H1 (cell line): ENCODE measurements at regions of chr2 and their contacts with region 1.

Region 1: GRCh38 chr2:121033461-121033996 is 251.5 kb downstream of the TFCP2L1 start:
- DNase-seq: no peak
- H3K4me3 ChIP-seq: no peak overlapping the region
- H3K27ac ChIP-seq: no peak overlapping the region
- H3K4me1 ChIP-seq: no peaks in the 10 kb centered on the region
- H3K27me3 ChIP-seq: peaks cover 0 to 28% (median 15%) of the 10 kb centered on the region in 4 experiments; a peak in 6 of 7 replicates
- CTCF ChIP-seq: no peak
- EP300 ChIP-seq: no peak
- POLR2A ChIP-seq: no peak
- RAD21 ChIP-seq: no peak

Region 2: DNA sequence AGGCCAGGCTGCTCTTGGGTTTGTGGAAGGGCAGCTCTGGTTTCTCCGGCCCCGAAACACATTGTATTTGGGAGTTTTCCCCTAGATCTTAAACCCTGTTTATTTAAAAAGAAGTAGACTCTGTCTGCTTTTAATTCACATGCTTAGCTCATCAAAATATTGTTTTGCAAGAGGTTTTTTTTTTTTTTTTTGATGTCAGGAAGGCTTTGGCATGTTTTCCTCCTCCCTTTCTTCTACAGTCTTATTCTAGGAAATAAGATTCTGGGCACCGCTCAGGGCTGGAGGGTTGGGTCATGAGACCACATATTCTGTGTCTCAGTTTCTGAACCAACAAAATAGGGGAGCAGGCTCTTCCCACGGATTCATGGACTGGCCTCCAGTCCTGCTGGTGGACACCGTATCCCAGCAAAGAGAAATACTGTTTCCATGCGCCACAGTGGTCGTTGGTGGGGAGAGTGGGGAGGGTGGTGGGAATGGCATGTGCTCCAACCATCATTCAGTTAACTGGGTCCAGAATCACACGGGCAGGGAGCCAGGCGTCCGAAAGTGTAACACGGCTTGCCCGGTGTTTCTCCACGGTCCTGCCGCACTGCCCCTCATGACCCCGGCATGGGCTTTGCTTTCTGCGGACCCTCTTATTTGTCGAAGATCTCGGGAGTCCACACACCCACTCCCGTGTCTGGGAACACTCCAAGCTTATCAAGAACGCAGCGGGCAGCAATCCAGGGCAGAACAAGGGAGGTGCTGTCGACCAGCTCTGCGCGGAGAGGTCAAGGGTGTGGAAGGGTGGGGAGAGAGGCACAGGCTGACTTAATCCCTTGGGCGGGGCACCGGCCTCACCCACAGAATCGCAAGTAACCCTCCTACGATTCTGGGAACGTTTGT is 121.2 kb before region 1 on chr2:
- CTCF ChIA-PET with region 1: no interaction called
- POLR2A ChIA-PET with region 1: no interaction called
- DNase-seq: no peak
- H3K4me3 ChIP-seq: no peak overlapping the region
- H3K27ac ChIP-seq: no peak overlapping the region
- H3K4me1 ChIP-seq: peaks cover 0 to 12% (median 8%) of the 10 kb centered on the region in 4 experiments; a peak in 6 of 7 replicates
- H3K27me3 ChIP-seq: no peaks in the 10 kb centered on the region
- CTCF ChIP-seq: no peak
- EP300 ChIP-seq: no peak
- POLR2A ChIP-seq: no peak
- RAD21 ChIP-seq: no peak

Region 3: GRCh38 chr2:121018136-121019061 is 15.1 kb before region 1 on chr2:
- CTCF ChIA-PET with region 1: interaction called, 12 read pairs
- POLR2A ChIA-PET with region 1: no interaction called
- DNase-seq: peak; percentile 53 to 77
- H3K4me3 ChIP-seq: peak overlapping the region in 1 of 4 experiments; percentile 33; a peak in 1 of 8 replicates
- H3K27ac ChIP-seq: no peak overlapping the region
- H3K4me1 ChIP-seq: peaks cover 0 to 11% (median 10%) of the 10 kb centered on the region in 4 experiments; a peak in 6 of 7 replicates
- H3K27me3 ChIP-seq: peaks cover 0 to 9% (median 5%) of the 10 kb centered on the region in 4 experiments; a peak in 4 of 7 replicates
- CTCF ChIP-seq: no peak
- EP300 ChIP-seq: no peak
- POLR2A ChIP-seq: peak in 1 of 2 experiments; percentile 38; a peak in 1 of 3 replicates
- RAD21 ChIP-seq: no peak

Region 4: GRCh38 chr2:121044412-121044811 is 10.9 kb after region 1 on chr2:
- CTCF ChIA-PET with region 1: interaction called, 37 read pairs
- POLR2A ChIA-PET with region 1: no interaction called
- DNase-seq: peak in 1 of 2 experiments; percentile 68
- H3K4me3 ChIP-seq: no peak overlapping the region
- H3K27ac ChIP-seq: no peak overlapping the region
- H3K4me1 ChIP-seq: no peaks in the 10 kb centered on the region
- H3K27me3 ChIP-seq: no peaks in the 10 kb centered on the region; a peak in 2 of 7 replicates
- CTCF ChIP-seq: peak; percentile 49 to 67 (median 53)
- EP300 ChIP-seq: no peak
- POLR2A ChIP-seq: no peak
- RAD21 ChIP-seq: peak; percentile 35 to 45; a peak in 3 of 4 replicates

Region 5: DNA sequence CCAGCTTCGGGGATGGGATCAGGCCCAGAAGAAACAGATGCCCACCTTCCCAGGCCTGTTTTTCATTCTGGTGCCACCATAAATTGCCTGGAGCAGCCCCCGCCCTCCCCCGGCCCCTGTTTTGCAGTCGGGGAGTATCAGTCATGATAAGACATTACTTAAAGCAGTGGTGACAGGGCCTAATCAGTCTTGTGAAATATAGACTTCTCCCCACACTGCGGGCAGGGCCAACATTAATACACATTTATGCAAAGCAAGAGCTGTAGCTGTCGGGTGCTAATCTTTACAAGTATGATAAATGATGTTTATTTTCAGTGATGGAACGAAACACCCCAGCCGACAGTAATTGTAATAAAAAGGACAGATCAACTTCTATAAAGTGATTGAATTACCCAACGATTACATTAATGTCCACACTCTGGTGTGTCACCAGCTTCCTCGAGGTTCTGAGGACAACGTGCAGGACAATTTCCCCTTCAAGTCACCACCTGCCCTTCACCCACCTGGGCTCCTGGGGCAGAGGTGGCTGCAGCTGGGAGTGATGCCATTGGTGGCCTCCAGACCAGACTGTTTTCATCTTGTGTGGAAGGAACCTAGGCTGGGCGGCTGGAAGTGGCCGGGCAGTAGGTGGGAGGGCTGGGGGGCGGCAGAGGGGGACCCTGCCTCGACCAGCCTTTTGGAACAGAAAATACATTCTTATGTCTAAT is 25.5 kb after region 1 on chr2:
- CTCF ChIA-PET with region 1: no interaction called
- POLR2A ChIA-PET with region 1: no interaction called
- DNase-seq: no peak
- H3K4me3 ChIP-seq: no peak overlapping the region
- H3K27ac ChIP-seq: no peak overlapping the region
- H3K4me1 ChIP-seq: peaks cover 0 to 15% (median 4%) of the 10 kb centered on the region in 4 experiments; a peak in 6 of 7 replicates
- H3K27me3 ChIP-seq: peaks cover 0 to 17% (median 5%) of the 10 kb centered on the region in 4 experiments; a peak in 3 of 7 replicates
- CTCF ChIP-seq: no peak
- EP300 ChIP-seq: no peak
- POLR2A ChIP-seq: no peak
- RAD21 ChIP-seq: no peak